ENCODE measurements at regions of chr21 and their contacts with region 1.

Region 1: DNA sequence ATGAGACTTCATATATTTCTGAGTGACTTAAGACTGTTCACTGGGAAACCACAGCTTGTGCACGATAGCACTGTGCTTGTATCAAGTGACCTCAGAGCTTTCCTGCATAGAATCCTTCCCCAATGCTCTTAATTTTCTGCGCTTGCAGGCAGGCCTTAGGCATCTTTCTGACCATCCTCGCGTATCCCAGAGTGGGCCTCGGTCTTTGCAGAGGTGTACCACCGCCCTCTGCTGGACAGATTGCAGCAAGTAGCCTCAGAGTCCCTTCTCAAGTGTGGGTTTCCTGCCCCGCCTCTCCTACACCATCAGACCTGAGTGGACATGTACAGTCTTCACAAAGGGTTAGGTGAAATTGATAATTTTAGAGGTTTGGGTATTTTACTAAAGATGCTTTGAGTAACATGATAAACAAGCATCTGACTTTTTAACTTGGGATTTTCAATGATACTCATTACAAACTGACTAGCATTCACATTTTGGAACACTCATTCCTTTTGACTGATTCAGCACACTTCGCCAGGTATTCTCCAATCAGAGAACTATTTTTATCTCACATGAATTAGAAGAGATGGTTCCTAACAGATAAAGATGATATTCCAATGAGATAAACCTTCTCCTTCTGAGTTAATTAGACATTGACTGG is 246.5 kb upstream of the USP25 start:
- DNase-seq: peak; percentile 80 to 88 (median 87)
- H3K4me3 ChIP-seq: no peak overlapping the region
- H3K27ac ChIP-seq: no peak overlapping the region
- H3K4me1 ChIP-seq: no peaks in the 10 kb centered on the region
- H3K27me3 ChIP-seq: no peaks in the 10 kb centered on the region
- CTCF ChIP-seq: peak; percentile 70 to 80 (median 76)
- EP300 ChIP-seq: no peak
- POLR2A ChIP-seq: no peak

Region 2: GRCh38 chr21:14259747-14260146 is 1223.5 kb before region 1 on chr21:
- intact Hi-C with region 1: loop called in 1 of 4 experiments (anchors 10 kb)
- DNase-seq: no peak
- H3K4me3 ChIP-seq: no peak overlapping the region
- H3K27ac ChIP-seq: no peak overlapping the region
- H3K4me1 ChIP-seq: no peaks in the 10 kb centered on the region
- H3K27me3 ChIP-seq: no peaks in the 10 kb centered on the region
- CTCF ChIP-seq: peak in 2 of 3 donors; percentile 22 to 32
- EP300 ChIP-seq: no peak
- POLR2A ChIP-seq: no peak

Region 3: GRCh38 chr21:14403681-14404318 is 1079.5 kb before region 1 on chr21:
- intact Hi-C with region 1: loop called in 2 of 4 experiments (anchors 10 kb)
- DNase-seq: no peak
- H3K4me3 ChIP-seq: no peak overlapping the region
- H3K27ac ChIP-seq: no peak overlapping the region
- H3K4me1 ChIP-seq: no peaks in the 10 kb centered on the region
- H3K27me3 ChIP-seq: no peaks in the 10 kb centered on the region
- CTCF ChIP-seq: peak; percentile 22 to 29 (median 22)
- EP300 ChIP-seq: no peak
- POLR2A ChIP-seq: no peak

Region 4: DNA sequence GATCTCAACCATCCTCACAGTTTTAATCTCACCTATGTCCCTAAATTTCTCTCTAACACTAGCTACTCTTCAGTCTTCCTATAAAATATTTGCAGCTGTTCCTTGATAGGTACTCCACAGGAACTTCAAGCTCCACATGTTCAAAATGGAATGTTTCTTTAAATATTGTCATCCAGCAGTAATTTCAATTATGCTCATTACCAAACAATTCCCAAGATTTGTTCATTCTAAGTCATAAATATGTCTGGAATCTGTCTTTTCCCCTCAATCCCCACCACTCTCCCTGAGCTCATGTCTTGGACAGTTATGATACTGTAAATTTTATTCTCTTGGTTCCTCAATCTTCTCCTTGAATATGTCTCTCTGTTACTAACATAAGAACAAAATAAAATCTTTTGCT is 632.9 kb before region 1 on chr21:
- intact Hi-C with region 1: loop called in 1 of 4 experiments (anchors 10 kb)
- DNase-seq: no peak
- H3K4me3 ChIP-seq: no peak overlapping the region
- H3K27ac ChIP-seq: no peak overlapping the region
- H3K4me1 ChIP-seq: no peaks in the 10 kb centered on the region
- H3K27me3 ChIP-seq: no peaks in the 10 kb centered on the region
- CTCF ChIP-seq: no peak
- EP300 ChIP-seq: no peak
- POLR2A ChIP-seq: no peak

Region 5: DNA sequence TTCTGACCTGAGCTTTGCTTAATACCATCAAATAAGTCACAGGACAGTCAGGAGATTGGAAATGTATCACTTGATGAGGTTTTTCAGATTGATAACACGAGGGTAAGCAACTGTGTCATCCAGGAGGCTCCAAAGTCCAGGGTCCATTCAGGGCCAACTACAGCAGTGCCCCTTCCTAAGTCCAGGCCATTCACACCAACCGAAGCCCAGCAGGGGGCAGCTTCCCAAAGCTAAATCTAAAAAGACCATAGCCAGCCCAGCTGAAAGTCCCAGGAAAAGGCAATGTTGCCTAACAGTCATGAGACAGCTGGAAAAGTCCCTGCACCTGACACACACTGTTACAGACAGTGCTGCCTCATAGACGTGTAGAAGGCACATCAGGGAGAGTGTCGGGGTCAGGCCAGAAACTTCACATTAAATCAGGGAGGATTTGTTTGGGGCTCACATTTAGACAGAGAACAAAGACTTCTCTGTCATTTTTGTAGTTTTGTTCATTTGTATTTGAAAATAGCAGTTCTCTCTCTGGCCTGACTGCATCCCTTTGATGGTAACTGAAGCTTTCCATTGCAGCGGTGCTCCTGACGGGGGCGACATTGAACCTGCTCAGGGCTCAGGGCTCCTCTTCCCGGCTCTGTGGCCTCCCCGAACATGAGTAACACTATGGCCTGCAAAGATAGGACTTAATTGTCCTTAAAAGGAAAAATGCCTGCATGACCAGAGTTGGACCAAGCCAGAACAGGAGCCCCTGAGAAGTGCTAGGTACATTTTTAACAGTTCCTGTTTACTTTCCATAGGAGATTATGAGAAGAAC is 618.8 kb before region 1 on chr21:
- intact Hi-C with region 1: loop called in 2 of 4 experiments (anchors 5 to 10 kb)
- DNase-seq: peak; percentile 63 to 80 (median 70)
- H3K4me3 ChIP-seq: no peak overlapping the region
- H3K27ac ChIP-seq: no peak overlapping the region
- H3K4me1 ChIP-seq: peaks cover 4% of the 10 kb centered on the region
- H3K27me3 ChIP-seq: no peaks in the 10 kb centered on the region
- CTCF ChIP-seq: peak in 2 of 3 donors; percentile 31 to 36
- EP300 ChIP-seq: no peak
- POLR2A ChIP-seq: no peak

Region 6: GRCh38 chr21:15557925-15558324 is 74.7 kb after region 1 on chr21:
- intact Hi-C with region 1: no loop called
- DNase-seq: no peak
- H3K4me3 ChIP-seq: no peak overlapping the region
- H3K27ac ChIP-seq: no peak overlapping the region
- H3K4me1 ChIP-seq: no peaks in the 10 kb centered on the region
- H3K27me3 ChIP-seq: no peaks in the 10 kb centered on the region
- CTCF ChIP-seq: no peak
- EP300 ChIP-seq: no peak
- POLR2A ChIP-seq: no peak

Region 7: DNA sequence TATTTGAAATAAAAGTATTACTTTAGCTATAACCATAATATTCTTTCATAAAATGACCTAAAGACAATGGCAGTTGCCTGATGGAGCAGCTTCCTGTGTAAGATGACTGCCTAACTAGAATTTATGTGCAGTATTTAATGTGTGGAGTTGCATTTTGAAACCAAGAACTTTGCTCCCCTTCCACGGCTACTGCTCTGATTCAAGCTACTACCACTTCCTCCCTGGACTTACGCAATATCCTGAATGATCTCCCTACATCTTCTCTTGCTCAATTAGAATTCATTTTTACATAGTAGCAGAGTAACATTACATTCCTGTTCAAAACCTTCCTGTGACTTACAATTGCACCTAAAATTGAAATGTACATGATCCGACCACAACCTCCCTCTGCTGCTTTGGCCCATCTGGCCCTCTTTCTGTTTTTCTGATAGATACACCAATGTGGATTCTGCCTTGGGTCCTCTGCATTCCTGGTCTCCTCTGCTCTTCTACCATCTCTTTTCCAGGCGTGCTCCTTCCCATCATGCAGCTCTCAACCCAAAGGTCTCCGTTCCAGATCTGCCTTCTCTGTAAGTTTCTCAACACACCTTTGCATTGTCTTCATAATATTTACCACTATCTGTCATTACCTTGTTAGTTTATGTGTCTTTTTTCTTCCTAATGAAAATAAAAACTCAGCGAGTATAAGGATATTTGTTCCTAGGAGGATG is 199.1 kb after region 1 on chr21:
- intact Hi-C with region 1: no loop called
- DNase-seq: no peak
- H3K4me3 ChIP-seq: no peak overlapping the region
- H3K27ac ChIP-seq: no peak overlapping the region
- H3K4me1 ChIP-seq: no peaks in the 10 kb centered on the region
- H3K27me3 ChIP-seq: no peaks in the 10 kb centered on the region
- CTCF ChIP-seq: no peak
- EP300 ChIP-seq: no peak
- POLR2A ChIP-seq: no peak

Region 8: GRCh38 chr21:15848632-15849031 is 365.4 kb after region 1 on chr21:
- intact Hi-C with region 1: no loop called
- DNase-seq: no peak
- H3K4me3 ChIP-seq: no peak overlapping the region
- H3K27ac ChIP-seq: no peak overlapping the region
- H3K4me1 ChIP-seq: no peaks in the 10 kb centered on the region
- H3K27me3 ChIP-seq: no peaks in the 10 kb centered on the region
- CTCF ChIP-seq: no peak
- EP300 ChIP-seq: no peak
- POLR2A ChIP-seq: no peak

Region 9: DNA sequence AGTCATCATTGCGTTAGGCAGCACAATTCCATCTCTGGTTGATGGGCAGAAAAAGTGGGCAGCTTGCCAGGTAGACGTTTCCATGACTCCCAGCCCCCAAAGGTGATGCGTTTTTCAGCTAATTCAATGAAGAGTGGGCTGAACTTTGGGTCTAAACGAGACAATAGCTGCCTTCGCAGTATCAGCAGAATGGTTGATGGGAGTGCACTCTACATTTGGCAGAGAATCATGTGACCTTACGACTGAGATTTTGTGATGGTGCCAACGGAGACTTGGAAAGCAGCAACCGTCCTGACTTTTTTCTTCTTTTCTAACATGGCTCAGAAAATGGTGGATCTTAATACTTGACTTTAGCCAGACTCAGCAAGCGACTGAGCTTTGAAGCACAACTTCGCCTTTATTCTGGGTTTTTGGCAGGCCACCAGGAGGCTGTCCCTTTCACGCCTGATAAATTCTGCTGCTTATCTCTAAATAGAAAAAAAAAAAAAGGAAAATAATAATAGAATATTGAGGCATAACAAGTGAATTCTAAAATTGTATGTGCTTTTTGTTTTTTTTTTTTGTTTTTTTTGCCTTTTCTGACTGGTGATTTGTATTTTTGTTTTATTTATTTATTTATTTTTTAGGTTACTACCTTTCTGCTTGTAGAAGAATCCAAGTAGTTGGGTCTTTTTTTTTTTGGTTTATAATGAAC is 1051.3 kb after region 1 on chr21:
- intact Hi-C with region 1: no loop called
- DNase-seq: peak; percentile 84 to 92 (median 87)
- H3K4me3 ChIP-seq: peak overlapping the region; percentile 51
- H3K27ac ChIP-seq: peak overlapping the region in 1 of 2 donors; percentile 84
- H3K4me1 ChIP-seq: no peaks in the 10 kb centered on the region
- H3K27me3 ChIP-seq: no peaks in the 10 kb centered on the region
- CTCF ChIP-seq: no peak
- EP300 ChIP-seq: no peak
- POLR2A ChIP-seq: no peak